ENCODE measurements at regions of chr6 and their contacts with region 1.

Region 1: GRCh38 chr6:144055121-144055931 is 40.0 kb downstream of the SF3B5 start:
- DNase-seq: peak; percentile 68
- H3K4me3 Mint-ChIP-seq: peak overlapping the region; percentile 69
- H3K27ac Mint-ChIP-seq: peak overlapping the region; percentile 90
- H3K4me1 Mint-ChIP-seq: peaks cover 27% of the 10 kb centered on the region
- H3K27me3 Mint-ChIP-seq: no peaks in the 10 kb centered on the region

Region 2: DNA sequence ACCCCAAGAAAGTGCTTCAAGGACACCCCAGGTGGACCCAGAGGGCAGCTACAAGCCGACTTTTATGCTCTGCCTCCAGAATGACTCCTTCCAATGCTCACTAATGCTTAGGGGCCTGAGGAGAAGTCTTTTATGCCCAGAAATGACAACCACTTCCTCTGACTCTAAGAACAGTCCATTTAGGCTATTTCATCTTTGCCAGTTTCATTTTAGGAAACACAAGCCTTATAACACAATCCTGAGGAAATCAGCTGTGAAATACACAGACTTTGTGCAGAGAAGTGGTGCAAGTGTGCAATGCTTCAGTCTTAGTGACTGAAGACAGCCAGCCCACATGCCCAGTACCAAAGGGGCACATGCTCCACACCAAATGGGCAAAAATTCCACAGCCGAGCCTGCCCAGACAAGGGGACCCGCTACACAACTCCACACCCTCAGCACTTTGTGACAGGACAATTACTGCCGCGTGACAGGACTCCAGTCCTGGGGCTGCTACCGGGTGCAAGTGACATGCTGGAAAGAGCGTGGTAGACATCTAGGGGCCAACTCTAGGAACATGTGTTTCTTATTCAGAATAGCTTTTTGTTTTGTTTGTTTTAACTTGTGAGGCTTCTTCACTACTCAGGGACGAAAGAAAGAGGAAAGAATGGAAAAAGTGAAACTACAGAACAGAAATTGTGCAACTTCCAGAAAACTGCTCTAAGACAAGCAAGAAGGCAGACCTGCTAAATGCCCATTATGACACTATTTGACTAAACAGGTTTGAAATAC is 19.1 kb before region 1 on chr6:
- CTCF ChIA-PET with region 1: no interaction called
- POLR2A ChIA-PET with region 1: no interaction called
- intact Hi-C with region 1: loop called (anchors 2 kb)
- DNase-seq: peak; percentile 28
- H3K4me3 Mint-ChIP-seq: no peak overlapping the region
- H3K27ac Mint-ChIP-seq: no peak overlapping the region
- H3K4me1 Mint-ChIP-seq: peaks cover 11% of the 10 kb centered on the region
- H3K27me3 Mint-ChIP-seq: no peaks in the 10 kb centered on the region

Region 3: GRCh38 chr6:144543006-144543871 is 487.9 kb after region 1 on chr6:
- CTCF ChIA-PET with region 1: no interaction called
- POLR2A ChIA-PET with region 1: no interaction called
- intact Hi-C with region 1: no loop called
- DNase-seq: peak; percentile 32
- H3K4me3 Mint-ChIP-seq: no peak overlapping the region
- H3K27ac Mint-ChIP-seq: no peak overlapping the region
- H3K4me1 Mint-ChIP-seq: peaks cover 20% of the 10 kb centered on the region
- H3K27me3 Mint-ChIP-seq: no peaks in the 10 kb centered on the region

Measured in activated CD4-positive, alpha-beta memory T cell treated with anti-CD3 and anti-CD28 coated beads for 36 hours (primary cell).